CD14-positive monocyte (primary cell): ENCODE measurements at regions of chr2 and their contacts with region 1.

Region 1: GRCh38 chr2:227515742-227516141 is 43.8 kb downstream of the AGFG1 start:
- DNase-seq: no peak
- H3K4me3 ChIP-seq: no peak overlapping the region
- H3K4me3 Mint-ChIP-seq: no peak overlapping the region
- H3K27ac ChIP-seq: peak overlapping the region in 1 of 2 donors; percentile 65
- H3K27ac Mint-ChIP-seq: peak overlapping the region in 4 of 7 donors; percentile 1 to 83 (median 50)
- H3K4me1 ChIP-seq: peaks cover 39 to 67% of the 10 kb centered on the region in 2 donors
- H3K4me1 Mint-ChIP-seq: peaks cover 83% of the 10 kb centered on the region
- H3K27me3 ChIP-seq: no peaks in the 10 kb centered on the region
- H3K27me3 Mint-ChIP-seq: peaks cover 0 to 3% (median 1%) of the 10 kb centered on the region in 3 donors
- CTCF ChIP-seq: no peak

Region 2: DNA sequence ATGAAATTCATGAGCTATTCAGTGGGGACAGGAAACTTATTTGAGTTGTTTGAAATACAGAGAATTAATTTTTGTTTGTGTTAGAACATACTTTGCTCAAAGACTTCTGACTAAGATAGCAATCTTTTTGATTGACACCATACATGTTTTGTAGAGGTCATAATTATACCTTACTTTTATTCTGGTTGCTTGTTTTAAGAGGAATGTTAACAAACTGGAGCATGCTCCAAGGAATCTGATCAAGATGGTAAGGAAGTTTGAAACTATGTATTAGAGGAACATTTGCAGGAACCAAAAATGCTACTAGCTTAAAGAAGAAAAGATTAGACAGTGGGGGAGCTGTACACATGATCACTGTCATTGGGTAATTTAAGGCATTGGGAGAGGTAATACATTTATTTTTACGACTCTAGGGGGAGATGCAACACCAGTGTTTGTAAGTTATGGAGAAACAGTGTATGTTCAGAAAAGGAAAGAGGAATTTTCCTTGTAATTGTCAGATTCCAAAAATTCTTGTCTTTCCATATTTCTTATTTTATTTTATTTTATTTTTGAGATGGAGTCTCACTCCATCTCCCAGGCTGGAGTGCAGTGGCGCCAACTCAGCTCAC is 35.8 kb before region 1 on chr2:
- intact Hi-C with region 1: loop called in 1 of 2 experiments (anchors 5 kb)
- DNase-seq: peak in 2 of 3 donors; percentile 16 to 35
- H3K4me3 ChIP-seq: no peak overlapping the region
- H3K4me3 Mint-ChIP-seq: no peak overlapping the region
- H3K27ac ChIP-seq: peak overlapping the region in 1 of 2 donors; percentile 30
- H3K27ac Mint-ChIP-seq: peak overlapping the region in 6 of 7 donors; percentile 17 to 64 (median 41)
- H3K4me1 ChIP-seq: peaks cover 35 to 45% of the 10 kb centered on the region in 2 donors
- H3K4me1 Mint-ChIP-seq: peaks cover 57% of the 10 kb centered on the region
- H3K27me3 ChIP-seq: no peaks in the 10 kb centered on the region
- H3K27me3 Mint-ChIP-seq: no peaks in the 10 kb centered on the region
- CTCF ChIP-seq: peak; percentile 39

Region 3: DNA sequence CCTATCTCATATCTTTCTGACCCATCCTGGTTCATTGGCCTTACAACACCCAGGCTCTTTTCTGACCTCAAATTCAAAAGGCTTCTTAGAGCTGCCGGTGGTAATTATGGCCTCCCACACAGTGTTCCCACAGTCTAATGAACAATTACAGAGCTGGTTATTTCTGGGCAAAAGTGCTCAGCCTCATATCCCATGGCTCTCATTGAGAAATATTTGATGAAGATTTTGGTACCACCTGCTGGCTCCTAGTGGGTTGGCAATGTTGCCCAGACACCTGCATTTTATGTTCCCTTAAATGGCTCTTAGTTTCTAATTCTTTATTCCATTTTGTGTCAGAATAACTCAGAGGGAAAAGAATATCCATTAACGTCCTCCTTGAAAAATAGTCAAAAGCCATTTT is 62.9 kb after region 1 on chr2:
- intact Hi-C with region 1: no loop called
- DNase-seq: no peak
- H3K4me3 ChIP-seq: no peak overlapping the region
- H3K4me3 Mint-ChIP-seq: no peak overlapping the region
- H3K27ac ChIP-seq: no peak overlapping the region
- H3K27ac Mint-ChIP-seq: no peak overlapping the region
- H3K4me1 ChIP-seq: no peaks in the 10 kb centered on the region
- H3K4me1 Mint-ChIP-seq: no peaks in the 10 kb centered on the region
- H3K27me3 ChIP-seq: no peaks in the 10 kb centered on the region
- H3K27me3 Mint-ChIP-seq: peaks cover 0 to 7% (median 2%) of the 10 kb centered on the region in 3 donors
- CTCF ChIP-seq: no peak

Region 4: GRCh38 chr2:227655454-227655853 is 139.7 kb after region 1 on chr2:
- intact Hi-C with region 1: no loop called
- DNase-seq: peak; percentile 20 to 75 (median 57)
- H3K4me3 ChIP-seq: no peak overlapping the region
- H3K4me3 Mint-ChIP-seq: no peak overlapping the region
- H3K27ac ChIP-seq: no peak overlapping the region
- H3K27ac Mint-ChIP-seq: no peak overlapping the region
- H3K4me1 ChIP-seq: no peaks in the 10 kb centered on the region
- H3K4me1 Mint-ChIP-seq: peaks cover 2% of the 10 kb centered on the region
- H3K27me3 ChIP-seq: no peaks in the 10 kb centered on the region
- H3K27me3 Mint-ChIP-seq: peaks cover 3 to 17% (median 6%) of the 10 kb centered on the region in 3 donors
- CTCF ChIP-seq: no peak